Activated CD8-positive, alpha-beta memory T cell treated with anti-CD3 and anti-CD28 coated beads, Interleukin-2, amount 10 ng/mL, durations not matched to agents 7 days and 5 days (primary cell): ENCODE measurements at regions of chr15 and their contacts with region 1.

Region 1: GRCh38 chr15:80058851-80059785 is at the start of gene ZFAND6:
- DNase-seq: peak; percentile 96
- ATAC-seq: peak; percentile 90
- H3K4me3 Mint-ChIP-seq: peak within 1 kb of the TSS; percentile 82
- H3K27ac Mint-ChIP-seq: peak within 1 kb of the TSS; percentile 92
- H3K4me1 Mint-ChIP-seq: peaks cover 54% of the 10 kb centered on the region
- H3K27me3 Mint-ChIP-seq: peaks cover 3% of the 10 kb centered on the region
- total RNA-seq, gene ZFAND6: 36.7 to 42.1 TPM

Region 2: GRCh38 chr15:79943820-79944219 is 115.3 kb before region 1 on chr15:
- CTCF ChIA-PET with region 1: no interaction called
- DNase-seq: no peak
- ATAC-seq: peak; percentile 50
- H3K4me3 Mint-ChIP-seq: no peak overlapping the region
- H3K27ac Mint-ChIP-seq: no peak overlapping the region
- H3K4me1 Mint-ChIP-seq: peaks cover 31% of the 10 kb centered on the region
- H3K27me3 Mint-ChIP-seq: no peaks in the 10 kb centered on the region

Region 3: DNA sequence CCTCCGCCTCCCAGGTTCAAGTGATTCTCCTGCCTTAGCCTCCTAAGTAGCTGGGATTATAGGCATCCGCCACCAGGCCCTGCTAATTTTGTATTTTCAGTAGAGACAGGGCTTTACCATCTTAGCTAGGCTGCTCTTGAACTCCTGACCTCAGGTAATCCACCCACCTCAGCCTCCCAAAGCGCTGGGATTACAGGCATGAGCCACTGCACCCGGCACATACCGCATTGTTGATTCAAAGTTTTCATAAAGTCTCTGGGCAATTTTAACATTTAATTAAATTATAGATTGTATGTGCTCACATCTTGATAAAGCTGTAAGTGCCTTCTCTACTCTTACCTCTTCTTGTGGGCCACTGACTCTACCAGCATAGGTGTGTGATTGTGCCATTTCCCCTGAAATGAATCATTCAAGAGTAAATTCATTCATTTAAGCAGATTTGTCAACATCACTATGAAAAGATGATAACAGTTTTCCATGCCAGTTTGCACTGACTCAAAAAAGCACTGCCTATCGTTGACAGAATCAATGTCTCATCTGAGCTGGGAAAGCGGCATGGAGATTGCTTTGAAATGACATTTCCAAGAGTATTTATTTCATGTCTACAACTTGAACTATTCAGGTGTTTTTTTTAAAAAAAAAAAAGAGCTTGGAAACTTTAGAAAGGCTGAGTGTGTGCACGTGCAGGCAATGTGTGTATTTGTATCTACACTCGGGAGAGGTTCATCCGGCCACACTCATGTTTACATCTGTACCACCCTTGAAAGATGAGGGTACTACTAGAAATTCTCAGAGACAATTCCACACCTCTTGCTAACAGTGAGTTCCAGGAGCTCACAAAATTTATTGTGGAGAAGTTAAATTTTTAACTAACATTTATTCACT is 91.6 kb before region 1 on chr15:
- CTCF ChIA-PET with region 1: interaction called, 10 read pairs
- DNase-seq: peak; percentile 55
- ATAC-seq: peak; percentile 43
- H3K4me3 Mint-ChIP-seq: peak overlapping the region; percentile 79
- H3K27ac Mint-ChIP-seq: peak overlapping the region; percentile 91
- H3K4me1 Mint-ChIP-seq: peaks cover 60% of the 10 kb centered on the region
- H3K27me3 Mint-ChIP-seq: no peaks in the 10 kb centered on the region

Region 4: GRCh38 chr15:80072285-80072994 is 13.3 kb after region 1 on chr15:
- CTCF ChIA-PET with region 1: interaction called, 11 read pairs
- DNase-seq: no peak
- ATAC-seq: peak; percentile 98
- H3K4me3 Mint-ChIP-seq: peak overlapping the region; percentile 76
- H3K27ac Mint-ChIP-seq: peak overlapping the region; percentile 73
- H3K4me1 Mint-ChIP-seq: peaks cover 41% of the 10 kb centered on the region
- H3K27me3 Mint-ChIP-seq: no peaks in the 10 kb centered on the region

Region 5: GRCh38 chr15:80173022-80173759 is 114.1 kb after region 1 on chr15:
- CTCF ChIA-PET with region 1: interaction called, 16 read pairs
- DNase-seq: peak; percentile 83
- ATAC-seq: peak; percentile 89
- H3K4me3 Mint-ChIP-seq: no peak overlapping the region
- H3K27ac Mint-ChIP-seq: peak overlapping the region; percentile 56
- H3K4me1 Mint-ChIP-seq: peaks cover 4% of the 10 kb centered on the region
- H3K27me3 Mint-ChIP-seq: no peaks in the 10 kb centered on the region